PC-3 (cell line): ENCODE measurements at regions of chr16 and their contacts with region 1.

Region 1: DNA sequence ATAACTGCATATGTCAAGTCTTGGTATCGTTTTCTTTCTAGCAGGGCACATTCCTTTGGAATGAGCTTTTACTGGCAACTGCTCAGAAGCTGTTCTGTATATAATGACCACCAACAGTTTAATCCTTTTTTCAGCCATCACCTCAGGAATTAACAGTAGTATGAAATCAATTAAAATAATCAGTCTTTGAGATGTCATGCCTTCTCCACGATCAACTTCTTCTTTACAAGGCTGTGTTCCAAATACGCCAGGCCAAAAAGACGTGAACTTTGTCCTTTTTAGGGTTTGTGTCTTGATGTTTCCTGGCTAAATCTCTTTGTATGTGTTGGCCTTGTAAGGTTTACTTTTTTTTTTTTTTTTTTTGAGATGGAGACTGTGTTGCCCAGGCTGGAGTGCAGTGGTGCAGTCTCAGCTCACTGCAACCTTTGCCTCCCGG is 54.9 kb downstream of the ABCC1 start:
- DNase-seq: peak; percentile 65
- ATAC-seq: peak; percentile 81
- H3K4me3 ChIP-seq: no peak overlapping the region
- H3K27ac ChIP-seq: no peak overlapping the region
- H3K4me1 ChIP-seq: peaks cover 9% of the 10 kb centered on the region
- H3K27me3 ChIP-seq: no peaks in the 10 kb centered on the region
- CTCF ChIP-seq: no peak

Region 2: DNA sequence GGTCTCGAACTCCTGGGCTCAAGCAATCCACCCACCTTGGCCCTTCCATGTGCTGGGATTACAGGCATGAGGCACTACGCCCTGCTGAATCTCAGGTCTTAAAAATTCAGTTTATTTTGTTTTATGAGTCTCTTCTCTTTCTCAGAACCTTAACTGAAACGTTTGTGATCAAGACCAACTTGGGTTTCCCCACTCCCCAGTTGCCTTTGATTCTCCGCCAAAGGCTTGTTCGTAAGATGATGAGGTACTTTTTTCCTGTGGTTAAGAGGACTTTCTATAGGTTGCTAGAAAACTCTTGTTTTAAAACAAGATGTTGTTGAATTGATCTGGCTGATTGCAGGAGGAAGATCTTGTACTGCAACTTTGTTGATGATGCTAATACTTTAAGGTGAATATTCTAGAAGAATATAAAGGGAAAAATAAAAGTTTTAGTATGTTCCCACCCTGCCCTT is 43.2 kb before region 1 on chr16:
- CTCF ChIA-PET with region 1: no interaction called
- POLR2A ChIA-PET with region 1: interaction called, 22 read pairs
- intact Hi-C with region 1: no loop called
- DNase-seq: no peak
- ATAC-seq: no peak
- H3K4me3 ChIP-seq: no peak overlapping the region
- H3K27ac ChIP-seq: no peak overlapping the region
- H3K4me1 ChIP-seq: peaks cover 3% of the 10 kb centered on the region; the same call in 1 of the 2 replicates
- H3K27me3 ChIP-seq: no peaks in the 10 kb centered on the region
- CTCF ChIP-seq: no peak